ENCODE measurements at regions of chr6 and their contacts with region 1.

Region 1: GRCh38 chr6:42338663-42339218 is 113.0 kb downstream of the TRERF1 start:
- DNase-seq: peak; percentile 96
- H3K4me3 ChIP-seq: no peak overlapping the region
- H3K27ac ChIP-seq: peak overlapping the region; percentile 82
- H3K4me1 ChIP-seq: peaks cover 28% of the 10 kb centered on the region
- H3K27me3 ChIP-seq: no peaks in the 10 kb centered on the region
- CTCF ChIP-seq: no peak

Region 2: DNA sequence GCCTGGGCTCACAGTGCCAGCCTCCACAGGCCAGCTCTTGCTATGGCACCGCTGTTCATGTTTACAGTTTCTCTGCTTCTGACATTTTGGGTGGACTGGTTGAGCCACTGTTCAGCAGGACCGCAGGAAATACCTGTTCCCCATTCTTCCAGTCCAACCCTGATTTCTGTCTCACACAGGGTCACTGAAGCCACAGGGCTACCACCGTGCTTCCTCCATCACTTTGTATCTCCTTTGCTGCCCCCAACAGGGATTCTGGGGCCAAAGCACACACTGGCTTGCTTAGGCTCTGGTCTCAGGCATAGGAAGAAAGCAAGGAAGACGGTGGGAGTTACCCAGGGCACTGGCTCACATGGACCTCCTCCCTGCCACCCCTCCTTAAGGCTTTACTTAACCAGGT is 1464.2 kb before region 1 on chr6:
- CTCF ChIA-PET with region 1: no interaction called
- dilution Hi-C with region 1: no loop called
- in situ Hi-C with region 1: no loop called
- intact Hi-C with region 1: no loop called
- DNase-seq: no peak
- H3K4me3 ChIP-seq: no peak overlapping the region
- H3K27ac ChIP-seq: no peak overlapping the region
- H3K4me1 ChIP-seq: peaks cover 10% of the 10 kb centered on the region
- H3K27me3 ChIP-seq: no peaks in the 10 kb centered on the region
- CTCF ChIP-seq: peak in 1 of 2 donors; percentile 23

Region 3: GRCh38 chr6:41072676-41073623 is 1265.8 kb before region 1 on chr6 and contains the start of gene NFYA:
- CTCF ChIA-PET with region 1: no interaction called
- dilution Hi-C with region 1: no loop called
- in situ Hi-C with region 1: no loop called
- intact Hi-C with region 1: no loop called
- DNase-seq: peak; percentile 99
- H3K4me3 ChIP-seq: peak within 1 kb of the TSS; percentile 90 to 92 (median 91)
- H3K27ac ChIP-seq: peak within 1 kb of the TSS; percentile 93
- H3K4me1 ChIP-seq: peaks cover 28% of the 10 kb centered on the region
- H3K27me3 ChIP-seq: no peaks in the 10 kb centered on the region
- CTCF ChIP-seq: peak in 1 of 2 donors; percentile 25
- total RNA-seq, gene NFYA: 18.5 to 29.1 TPM

Region 4: GRCh38 chr6:42086046-42087035 is 252.4 kb before region 1 on chr6:
- CTCF ChIA-PET with region 1: no interaction called
- dilution Hi-C with region 1: no loop called
- in situ Hi-C with region 1: no loop called
- intact Hi-C with region 1: no loop called
- DNase-seq: no peak
- H3K4me3 ChIP-seq: no peak overlapping the region
- H3K27ac ChIP-seq: no peak overlapping the region
- H3K4me1 ChIP-seq: peaks cover 14% of the 10 kb centered on the region
- H3K27me3 ChIP-seq: no peaks in the 10 kb centered on the region
- CTCF ChIP-seq: peak; percentile 36 to 41

Region 5: GRCh38 chr6:42251911-42252637 is 86.7 kb before region 1 on chr6:
- CTCF ChIA-PET with region 1: no interaction called
- dilution Hi-C with region 1: loop called (anchors 5 kb)
- in situ Hi-C with region 1: no loop called
- intact Hi-C with region 1: no loop called
- DNase-seq: no peak
- H3K4me3 ChIP-seq: no peak overlapping the region
- H3K27ac ChIP-seq: no peak overlapping the region
- H3K4me1 ChIP-seq: peaks cover 27% of the 10 kb centered on the region
- H3K27me3 ChIP-seq: no peaks in the 10 kb centered on the region
- CTCF ChIP-seq: no peak

Region 6: DNA sequence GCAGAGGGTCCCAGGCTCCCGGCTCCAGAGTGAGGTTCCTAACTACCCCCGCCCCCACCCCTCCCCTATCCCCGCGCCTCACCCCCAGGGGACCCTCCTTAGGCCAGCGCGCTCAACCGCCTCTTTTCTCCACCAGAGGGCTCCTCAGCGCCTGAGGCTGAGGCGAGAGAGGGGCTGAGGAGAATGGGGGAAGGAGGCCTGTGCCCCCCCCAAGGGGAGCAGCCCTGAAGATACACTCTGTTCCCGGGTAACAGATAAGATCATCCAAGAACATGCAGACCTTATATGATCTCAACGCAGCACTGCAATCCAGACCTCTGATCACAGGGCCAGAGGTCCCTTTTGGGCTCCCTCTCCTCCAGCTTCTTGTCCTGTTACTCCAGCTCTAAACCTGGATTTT is 77.8 kb before region 1 on chr6:
- CTCF ChIA-PET with region 1: no interaction called
- dilution Hi-C with region 1: no loop called
- in situ Hi-C with region 1: no loop called
- intact Hi-C with region 1: loop called (anchors 5 kb)
- DNase-seq: no peak
- H3K4me3 ChIP-seq: no peak overlapping the region
- H3K27ac ChIP-seq: no peak overlapping the region
- H3K4me1 ChIP-seq: no peaks in the 10 kb centered on the region
- H3K27me3 ChIP-seq: no peaks in the 10 kb centered on the region
- CTCF ChIP-seq: peak in 1 of 2 donors; percentile 58

Region 7: GRCh38 chr6:42294759-42295158 is 44.0 kb before region 1 on chr6:
- CTCF ChIA-PET with region 1: no interaction called
- dilution Hi-C with region 1: no loop called
- in situ Hi-C with region 1: no loop called
- intact Hi-C with region 1: loop called (anchors 5 kb)
- DNase-seq: peak; percentile 98
- H3K4me3 ChIP-seq: no peak overlapping the region
- H3K27ac ChIP-seq: peak overlapping the region; percentile 90
- H3K4me1 ChIP-seq: peaks cover 60% of the 10 kb centered on the region
- H3K27me3 ChIP-seq: no peaks in the 10 kb centered on the region
- CTCF ChIP-seq: no peak

Region 8: DNA sequence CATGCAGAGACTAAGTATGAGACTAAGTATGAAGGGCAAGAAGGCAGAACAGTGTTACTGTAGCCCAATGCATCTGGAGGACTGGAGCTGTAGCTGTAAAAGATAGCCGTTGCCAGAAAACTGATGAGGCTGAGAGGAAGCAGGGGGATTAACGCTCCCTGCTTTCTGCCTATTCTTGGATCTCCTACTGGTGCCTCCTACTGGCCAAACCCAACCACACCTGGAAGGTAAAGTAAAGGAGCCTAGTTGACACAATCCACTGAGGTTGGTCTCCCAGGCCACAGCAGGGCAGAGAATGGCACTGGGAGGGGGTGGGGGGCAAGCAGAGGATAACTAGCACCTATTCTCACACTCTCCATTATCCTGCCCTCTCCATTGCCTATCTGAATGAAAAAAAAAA is 16.1 kb before region 1 on chr6:
- CTCF ChIA-PET with region 1: no interaction called
- dilution Hi-C with region 1: no loop called
- in situ Hi-C with region 1: no loop called
- intact Hi-C with region 1: loop called (anchors 1 kb)
- DNase-seq: no peak
- H3K4me3 ChIP-seq: no peak overlapping the region
- H3K27ac ChIP-seq: no peak overlapping the region
- H3K4me1 ChIP-seq: peaks cover 20% of the 10 kb centered on the region
- H3K27me3 ChIP-seq: no peaks in the 10 kb centered on the region
- CTCF ChIP-seq: no peak

Region 9: GRCh38 chr6:42402184-42402583 is 63.4 kb after region 1 on chr6:
- CTCF ChIA-PET with region 1: no interaction called
- dilution Hi-C with region 1: no loop called
- in situ Hi-C with region 1: no loop called
- intact Hi-C with region 1: loop called (anchors 5 kb)
- DNase-seq: peak; percentile 19
- H3K4me3 ChIP-seq: no peak overlapping the region
- H3K27ac ChIP-seq: no peak overlapping the region
- H3K4me1 ChIP-seq: peaks cover 45% of the 10 kb centered on the region
- H3K27me3 ChIP-seq: no peaks in the 10 kb centered on the region
- CTCF ChIP-seq: no peak

Region 10: DNA sequence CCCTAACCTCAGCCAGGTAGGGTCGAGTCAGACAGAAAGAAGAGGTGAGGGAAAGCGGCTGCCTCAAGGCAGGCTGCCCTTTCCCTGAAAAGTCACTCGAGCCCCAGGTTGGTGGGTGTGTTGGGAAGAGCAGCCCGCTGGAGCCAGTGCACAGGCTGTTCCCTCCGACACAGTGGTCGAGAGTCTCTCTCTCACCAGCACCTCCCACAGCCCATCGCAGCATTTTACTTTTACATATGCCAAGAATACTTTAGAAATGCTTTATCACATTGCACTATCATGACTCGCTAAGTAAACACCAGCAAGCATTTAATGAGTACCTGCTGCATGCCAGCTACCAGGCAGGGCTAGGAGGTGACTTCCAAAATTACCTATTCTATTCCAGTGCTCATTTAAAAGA is 382.0 kb after region 1 on chr6:
- CTCF ChIA-PET with region 1: interaction called, 13 read pairs
- dilution Hi-C with region 1: no loop called
- in situ Hi-C with region 1: no loop called
- intact Hi-C with region 1: no loop called
- DNase-seq: peak; percentile 56
- H3K4me3 ChIP-seq: no peak overlapping the region
- H3K27ac ChIP-seq: no peak overlapping the region
- H3K4me1 ChIP-seq: no peaks in the 10 kb centered on the region
- H3K27me3 ChIP-seq: no peaks in the 10 kb centered on the region
- CTCF ChIP-seq: no peak

Region 11: DNA sequence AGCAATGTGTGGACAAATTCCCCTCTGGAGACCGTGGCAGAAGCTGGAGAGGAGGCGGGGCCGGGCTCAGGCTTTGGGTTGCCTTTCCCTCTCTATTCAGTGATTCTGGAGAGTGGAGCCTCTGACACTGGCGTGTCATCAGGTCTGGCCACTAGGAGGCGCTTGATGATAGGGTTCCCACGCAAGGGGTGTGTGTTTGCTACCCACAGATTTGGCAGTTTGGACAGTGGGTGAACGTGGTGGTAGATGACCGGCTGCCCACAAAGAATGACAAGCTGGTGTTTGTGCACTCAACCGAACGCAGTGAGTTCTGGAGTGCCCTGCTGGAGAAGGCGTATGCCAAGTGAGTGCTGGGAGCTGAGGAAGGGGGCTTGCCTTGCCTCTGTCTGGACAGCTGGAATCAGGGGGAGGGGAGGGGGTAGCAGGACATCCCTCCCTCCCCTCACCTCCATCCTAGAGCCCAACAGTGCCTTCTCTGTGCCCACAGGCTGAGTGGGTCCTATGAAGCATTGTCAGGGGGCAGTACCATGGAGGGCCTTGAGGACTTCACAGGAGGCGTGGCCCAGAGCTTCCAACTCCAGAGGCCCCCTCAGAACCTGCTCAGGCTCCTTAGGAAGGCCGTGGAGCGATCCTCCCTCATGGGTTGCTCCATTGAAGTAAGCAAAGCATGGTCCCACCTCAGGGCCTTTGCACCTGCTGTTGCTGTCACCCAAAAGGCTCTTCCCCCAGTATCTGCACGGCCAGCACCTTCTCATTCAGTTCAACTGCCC is 1834.2 kb after region 1 on chr6:
- CTCF ChIA-PET with region 1: no interaction called
- dilution Hi-C with region 1: no loop called
- in situ Hi-C with region 1: no loop called
- intact Hi-C with region 1: no loop called
- DNase-seq: peak; percentile 69
- H3K4me3 ChIP-seq: no peak overlapping the region
- H3K27ac ChIP-seq: no peak overlapping the region
- H3K4me1 ChIP-seq: peaks cover 7% of the 10 kb centered on the region
- H3K27me3 ChIP-seq: no peaks in the 10 kb centered on the region
- CTCF ChIP-seq: peak; percentile 92 to 94